ENCODE measurements at regions of chr9 and their contacts with region 1.

Region 1: DNA sequence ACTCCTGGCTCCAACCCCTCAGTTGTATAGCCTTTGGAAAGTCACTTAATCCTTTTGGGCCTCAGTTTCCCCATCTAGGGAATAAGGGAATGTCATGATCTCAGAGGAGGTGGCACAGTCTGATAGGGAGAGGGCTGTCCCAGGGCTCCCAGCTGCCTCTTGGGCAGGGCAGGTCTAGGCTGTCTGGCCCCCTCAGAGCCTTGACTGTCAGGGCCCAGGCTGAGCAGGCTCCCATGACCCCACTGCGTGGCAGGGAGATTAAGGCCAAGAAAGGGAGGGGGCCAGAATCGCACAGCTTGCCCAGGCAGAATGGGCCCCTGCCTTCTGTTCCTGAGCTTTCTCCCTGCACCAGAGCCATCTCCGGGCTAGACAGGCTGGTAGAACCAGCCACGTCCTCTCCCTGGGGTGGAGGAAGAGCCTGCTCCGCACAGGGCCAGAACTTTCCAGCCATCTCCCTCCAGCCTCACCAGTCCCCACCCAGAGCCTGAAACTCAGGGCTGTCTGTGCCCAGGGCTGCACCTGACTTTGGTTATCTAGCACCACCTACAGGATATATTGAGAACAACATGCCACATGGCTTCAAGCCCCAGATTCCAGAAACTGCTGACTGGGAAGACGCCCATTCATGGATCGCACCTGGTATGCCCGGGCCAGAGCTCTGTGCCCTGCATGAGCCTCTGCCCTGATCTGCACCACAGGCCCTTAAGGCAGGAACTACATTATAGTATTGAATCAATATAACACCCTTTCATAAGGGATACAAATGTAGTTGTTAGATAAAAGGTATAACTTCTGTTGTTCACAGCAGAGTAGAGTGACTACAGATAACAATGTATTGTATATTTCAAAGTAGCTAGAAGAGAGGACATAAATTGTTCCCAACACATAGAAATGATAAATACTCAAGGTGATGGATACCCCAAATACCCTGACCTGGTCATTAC is 32.0 kb downstream of the NAIF1 start:
- DNase-seq: peak; percentile 72
- H3K4me3 Mint-ChIP-seq: no peak overlapping the region
- H3K27ac Mint-ChIP-seq: peak overlapping the region; percentile 25
- H3K4me1 Mint-ChIP-seq: peaks cover 44% of the 10 kb centered on the region
- H3K27me3 Mint-ChIP-seq: peaks cover 2% of the 10 kb centered on the region

Region 2: DNA sequence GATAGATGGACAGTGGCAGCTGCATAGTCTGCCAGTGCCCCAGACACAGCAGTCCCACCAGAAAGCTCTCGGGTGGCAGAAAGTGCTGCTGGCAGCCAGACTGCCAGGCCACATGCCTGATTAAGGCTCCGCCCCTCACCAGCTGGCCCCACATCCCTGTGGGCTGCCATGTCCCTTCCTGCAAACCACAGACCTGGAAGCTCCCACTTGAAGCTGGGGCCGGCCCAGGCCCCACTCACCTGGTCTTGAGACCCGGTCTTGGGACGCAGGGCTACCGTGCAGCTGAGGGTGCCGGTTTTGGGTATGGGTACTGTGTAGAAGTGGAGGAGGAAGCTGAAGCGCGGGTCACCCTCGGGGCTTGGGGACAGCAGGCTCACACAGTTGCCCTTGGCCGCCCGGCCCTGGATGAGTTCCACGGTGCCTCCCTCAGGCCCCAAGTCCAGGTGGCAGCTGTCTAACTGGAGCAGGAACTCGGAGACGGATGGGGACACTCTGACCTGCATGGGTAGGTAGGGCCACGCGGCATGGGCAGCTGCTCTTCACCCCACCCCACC is 217.1 kb before region 1 on chr9:
- CTCF ChIA-PET with region 1: no interaction called
- POLR2A ChIA-PET with region 1: no interaction called
- DNase-seq: no peak
- H3K4me3 Mint-ChIP-seq: no peak overlapping the region
- H3K27ac Mint-ChIP-seq: peak overlapping the region; percentile 10
- H3K4me1 Mint-ChIP-seq: no peaks in the 10 kb centered on the region
- H3K27me3 Mint-ChIP-seq: no peaks in the 10 kb centered on the region

Region 3: DNA sequence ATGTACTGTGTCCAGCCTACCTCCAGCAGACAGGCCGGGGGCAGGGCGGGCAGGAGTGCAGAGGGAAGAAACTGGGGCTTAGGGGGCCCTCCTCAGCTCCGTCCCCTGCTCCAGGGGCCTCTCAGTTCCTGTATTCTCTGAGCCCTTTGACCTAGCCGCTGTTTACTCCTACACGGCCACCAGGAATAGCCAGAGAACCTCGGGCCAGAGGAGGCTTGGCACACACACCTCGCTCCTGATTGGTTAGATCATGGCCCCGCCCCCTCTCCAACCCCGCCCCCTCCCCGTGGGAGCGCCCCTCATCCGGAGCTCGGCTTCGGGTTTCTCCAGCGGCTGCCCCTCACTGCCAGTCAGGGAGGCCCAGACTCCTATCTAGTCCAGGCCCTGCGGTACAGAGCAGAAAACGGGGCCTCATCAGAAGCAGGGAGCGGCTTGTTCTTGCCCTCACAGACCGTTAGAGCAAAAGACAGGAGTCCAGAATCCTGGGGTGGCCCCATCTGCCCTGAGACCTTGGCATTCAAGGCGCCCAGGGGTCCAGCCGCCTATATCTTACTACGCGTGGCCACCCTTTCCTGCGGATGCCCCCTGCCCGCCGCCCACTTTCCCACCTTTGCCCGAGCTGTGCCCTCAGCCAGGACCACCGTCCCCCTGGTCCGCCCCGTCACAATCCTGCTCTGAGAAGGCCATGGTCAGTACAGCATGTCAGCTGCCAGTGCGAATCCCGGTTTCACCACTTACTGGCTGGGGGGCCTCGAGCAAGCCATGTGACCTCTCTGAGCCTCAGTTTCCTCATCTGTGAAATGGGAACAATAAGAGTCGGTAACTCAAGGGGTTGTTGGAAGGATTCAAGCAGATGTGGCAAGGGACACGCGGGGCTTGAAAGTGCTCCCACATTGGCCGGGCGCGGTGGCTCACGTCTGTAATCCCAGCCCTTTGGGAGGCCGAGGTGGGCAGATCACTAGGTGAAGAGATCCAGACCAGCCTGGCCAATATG is 137.6 kb before region 1 on chr9:
- CTCF ChIA-PET with region 1: no interaction called
- POLR2A ChIA-PET with region 1: no interaction called
- DNase-seq: no peak
- H3K4me3 Mint-ChIP-seq: peak overlapping the region; percentile 39
- H3K27ac Mint-ChIP-seq: no peak overlapping the region
- H3K4me1 Mint-ChIP-seq: peaks cover 51% of the 10 kb centered on the region
- H3K27me3 Mint-ChIP-seq: no peaks in the 10 kb centered on the region

Region 4: DNA sequence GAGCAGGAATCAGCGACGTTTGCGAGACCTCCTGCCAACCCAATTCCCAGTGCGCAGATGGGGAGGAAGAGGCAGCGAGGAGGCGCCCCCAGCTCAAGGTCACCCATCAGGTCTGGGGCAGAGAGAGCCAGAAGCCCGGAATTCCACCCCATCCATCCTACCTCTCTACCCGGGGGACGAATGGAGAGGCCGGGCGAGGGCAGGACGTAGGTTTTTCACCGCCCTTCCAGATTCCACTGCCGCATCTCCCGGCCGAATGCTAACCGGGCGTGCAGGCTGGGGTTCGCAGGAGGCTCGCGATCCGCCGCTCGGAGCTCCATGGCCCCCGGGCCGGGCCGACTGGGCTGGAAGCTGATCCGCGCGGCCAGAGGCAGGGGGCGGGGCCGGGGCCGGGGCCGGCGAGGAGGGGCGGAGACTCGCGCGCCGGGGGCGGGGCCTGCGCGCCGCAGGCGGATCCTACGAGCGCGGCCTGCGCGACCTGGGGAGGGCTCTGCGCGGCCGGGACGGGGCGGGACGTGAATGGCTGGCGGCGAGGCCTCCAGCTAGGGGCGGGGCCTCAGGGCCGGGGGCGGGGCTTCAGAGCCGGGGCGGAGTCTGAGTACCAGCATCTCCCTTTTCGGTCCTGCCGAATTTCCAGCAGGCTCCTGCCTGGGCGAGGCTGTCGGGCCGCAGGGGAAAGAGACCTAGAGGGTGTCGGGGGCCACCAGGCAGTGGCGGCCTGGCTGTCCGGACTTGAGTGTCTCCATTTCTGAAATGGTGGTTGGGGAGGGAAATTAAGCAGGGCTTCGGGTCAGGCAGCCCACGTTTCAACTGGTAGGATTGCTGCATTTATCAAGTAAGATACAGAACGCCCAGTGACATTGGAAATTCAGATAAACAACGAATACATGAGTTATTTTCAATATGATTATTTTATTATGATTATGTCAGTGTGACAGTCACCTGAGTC is 118.2 kb before region 1 on chr9 and contains the start of gene ST6GALNAC4:
- CTCF ChIA-PET with region 1: interaction called, 12 read pairs
- POLR2A ChIA-PET with region 1: no interaction called
- DNase-seq: peak; percentile 96
- H3K4me3 Mint-ChIP-seq: peak within 1 kb of the TSS; percentile 72
- H3K27ac Mint-ChIP-seq: peak within 1 kb of the TSS; percentile 65
- H3K4me1 Mint-ChIP-seq: peaks cover 65% of the 10 kb centered on the region
- H3K27me3 Mint-ChIP-seq: peaks cover under 1% of the 10 kb centered on the region
- total RNA-seq, gene ST6GALNAC4: 19.4 to 21.5 TPM

Region 5: GRCh38 chr9:127943731-127944144 is 91.4 kb before region 1 on chr9:
- CTCF ChIA-PET with region 1: interaction called, 157 read pairs
- POLR2A ChIA-PET with region 1: interaction called, 13 read pairs
- DNase-seq: peak; percentile 80
- H3K4me3 Mint-ChIP-seq: no peak overlapping the region
- H3K27ac Mint-ChIP-seq: peak overlapping the region; percentile 59
- H3K4me1 Mint-ChIP-seq: peaks cover 19% of the 10 kb centered on the region
- H3K27me3 Mint-ChIP-seq: no peaks in the 10 kb centered on the region

Region 6: GRCh38 chr9:127980706-127981558 is 54.2 kb before region 1 on chr9 and contains the start of gene EEIG1:
- CTCF ChIA-PET with region 1: interaction called, 178 read pairs
- POLR2A ChIA-PET with region 1: interaction called, 465 read pairs
- DNase-seq: peak; percentile 96
- H3K4me3 Mint-ChIP-seq: peak within 1 kb of the TSS; percentile 91
- H3K27ac Mint-ChIP-seq: peak within 1 kb of the TSS; percentile 81
- H3K4me1 Mint-ChIP-seq: peaks cover 44% of the 10 kb centered on the region
- H3K27me3 Mint-ChIP-seq: no peaks in the 10 kb centered on the region
- total RNA-seq, gene EEIG1: 212 to 218 TPM

Region 7: DNA sequence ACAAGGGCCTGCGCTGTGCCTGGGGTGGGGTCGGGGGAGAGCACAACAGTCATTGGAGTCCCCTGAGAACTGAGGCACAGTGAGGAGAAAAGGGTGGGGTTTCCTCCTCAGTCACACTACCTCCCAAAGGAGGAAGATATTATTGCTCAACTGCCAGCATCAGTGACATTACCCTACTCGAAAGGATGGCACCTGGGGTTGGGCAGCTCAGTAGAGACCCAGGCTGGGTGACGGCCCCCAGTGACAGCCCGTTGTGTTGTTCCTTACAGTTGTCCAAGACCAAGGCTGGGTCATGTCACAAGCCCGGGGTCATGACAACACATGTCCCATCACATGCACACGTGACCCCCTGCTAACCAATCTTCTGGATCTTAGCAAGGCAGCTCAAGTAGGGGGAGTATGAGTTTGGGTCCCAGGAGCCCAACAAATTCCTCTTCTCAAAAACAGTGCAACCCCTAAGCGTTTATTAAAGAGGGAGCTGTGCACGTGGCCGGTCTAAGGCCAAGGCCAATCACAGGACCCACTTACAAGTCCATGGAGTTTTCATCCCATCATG is 27.8 kb after region 1 on chr9:
- CTCF ChIA-PET with region 1: interaction called, 12 read pairs
- POLR2A ChIA-PET with region 1: interaction called, 15 read pairs
- DNase-seq: no peak
- H3K4me3 Mint-ChIP-seq: no peak overlapping the region
- H3K27ac Mint-ChIP-seq: peak overlapping the region; percentile 78
- H3K4me1 Mint-ChIP-seq: peaks cover 51% of the 10 kb centered on the region
- H3K27me3 Mint-ChIP-seq: no peaks in the 10 kb centered on the region